HCT116 (cell line): ENCODE measurements at regions of chr1 and their contacts with region 1.

Region 1: DNA sequence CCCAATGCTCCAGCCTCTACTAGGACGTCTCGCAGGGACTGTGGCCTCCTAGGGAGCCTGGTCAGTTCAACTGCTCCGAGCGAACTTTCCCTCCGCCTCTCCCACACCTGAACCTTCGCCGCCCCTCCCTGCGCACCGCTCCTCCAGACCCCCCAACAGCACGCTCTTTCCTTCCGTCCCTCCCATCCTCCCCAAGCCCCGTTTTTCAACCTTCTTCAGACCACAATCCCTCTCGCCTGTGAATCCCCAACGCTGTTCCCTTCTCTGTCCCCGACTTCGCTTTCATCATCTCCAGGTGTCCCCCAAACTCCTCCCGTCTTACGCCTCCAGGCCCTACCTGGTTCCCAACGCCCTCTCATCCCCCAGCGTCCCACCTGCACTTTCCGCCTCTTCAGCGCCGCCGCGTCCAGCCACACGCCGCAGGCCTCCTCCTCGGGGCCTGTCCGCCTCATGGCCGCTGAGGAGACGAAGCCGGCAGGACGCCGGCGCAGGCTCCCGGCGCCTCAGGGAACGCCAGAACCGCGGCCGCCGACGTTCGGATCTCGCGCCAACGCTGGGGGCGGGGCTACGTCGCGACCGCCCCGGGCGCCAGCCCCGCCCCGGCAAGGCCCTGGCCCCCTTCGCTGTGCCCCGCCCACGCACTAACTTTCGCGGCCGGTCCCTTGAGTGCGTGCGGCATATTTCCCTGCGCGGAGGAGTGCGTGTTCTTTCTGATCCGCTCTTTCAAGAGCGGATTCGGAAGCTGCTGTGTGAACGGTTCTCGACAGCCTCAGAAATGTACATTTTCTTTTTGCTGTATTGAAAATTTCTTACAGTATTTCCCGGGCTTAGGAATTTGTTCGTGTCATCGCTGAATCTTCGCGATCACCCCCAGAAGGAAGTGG is at the start of gene AUNIP:
- DNase-seq: peak; percentile 74
- ATAC-seq: peak; percentile 83
- H3K4me3 ChIP-seq: peak within 1 kb of the TSS; percentile 97 to 99
- H3K27ac ChIP-seq: peak within 1 kb of the TSS; percentile 81
- H3K4me1 ChIP-seq: peaks cover 30 to 51% of the 10 kb centered on the region in 2 experiments
- H3K27me3 ChIP-seq: no peaks in the 10 kb centered on the region
- CTCF ChIP-seq: no peak
- POLR2A ChIP-seq: peak; percentile 79
- RAD21 ChIP-seq: no peak
- total RNA-seq, gene AUNIP: 12.1 TPM

Region 2: GRCh38 chr1:25895365-25895993 is 36.3 kb after region 1 on chr1:
- CTCF ChIA-PET with region 1: interaction called, 4 read pairs
- POLR2A ChIA-PET with region 1: interaction called, 4 read pairs
- RAD21 ChIA-PET with region 1: no interaction called
- intact Hi-C with region 1: loop called (anchors 2 kb)
- DNase-seq: peak; percentile 73
- ATAC-seq: peak; percentile 70
- H3K4me3 ChIP-seq: no peak overlapping the region
- H3K27ac ChIP-seq: peak overlapping the region; percentile 24
- H3K4me1 ChIP-seq: peaks cover 44 to 61% of the 10 kb centered on the region in 2 experiments
- H3K27me3 ChIP-seq: no peaks in the 10 kb centered on the region
- CTCF ChIP-seq: peak; percentile 97 to 99 (median 98)
- POLR2A ChIP-seq: no peak
- RAD21 ChIP-seq: peak; percentile 97

Region 3: GRCh38 chr1:26438041-26438440 is 578.9 kb after region 1 on chr1:
- CTCF ChIA-PET with region 1: no interaction called
- POLR2A ChIA-PET with region 1: no interaction called
- RAD21 ChIA-PET with region 1: no interaction called
- intact Hi-C with region 1: no loop called
- DNase-seq: no peak
- ATAC-seq: no peak
- H3K4me3 ChIP-seq: no peak overlapping the region
- H3K27ac ChIP-seq: no peak overlapping the region
- H3K4me1 ChIP-seq: peaks cover 3 to 4% of the 10 kb centered on the region in 2 experiments; a peak in 2 of 4 replicates
- H3K27me3 ChIP-seq: no peaks in the 10 kb centered on the region
- CTCF ChIP-seq: no peak
- POLR2A ChIP-seq: no peak
- RAD21 ChIP-seq: no peak